Activated naive CD4-positive, alpha-beta T cell treated with anti-CD3 and anti-CD28 coated beads for 36 hours (primary cell): ENCODE measurements at regions of chr3 and their contacts with region 1.

Region 1: DNA sequence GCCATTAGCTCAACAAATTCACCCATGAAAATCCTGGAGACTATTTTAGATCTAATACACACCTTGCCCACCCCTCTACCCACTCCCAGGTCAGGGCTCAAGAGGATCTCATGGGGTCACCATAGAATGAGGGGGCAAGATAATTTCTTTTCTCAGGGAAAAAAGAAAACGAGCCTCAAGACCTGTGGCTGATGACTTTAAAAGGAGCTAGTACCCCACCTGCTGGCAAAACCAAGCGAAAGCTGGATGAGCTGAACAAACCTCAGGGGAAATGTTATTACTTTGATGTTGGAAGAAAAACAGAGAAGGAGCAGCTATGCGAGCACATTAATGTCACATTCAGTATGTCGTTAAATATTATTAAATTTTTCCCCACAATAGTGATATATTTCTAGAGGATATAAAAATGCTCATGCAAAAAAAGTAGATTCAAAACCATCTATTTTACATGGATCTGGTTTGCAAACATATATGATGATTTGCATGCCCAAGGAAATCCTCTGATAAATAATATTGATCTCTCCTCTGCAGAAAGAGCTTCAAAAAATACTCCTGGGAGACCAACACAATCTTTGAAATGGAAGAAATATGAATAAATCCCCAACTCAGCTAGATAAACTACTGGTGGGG is 37.7 kb downstream of the PLD1 start:
- DNase-seq: peak; percentile 76
- H3K4me3 Mint-ChIP-seq: no peak overlapping the region
- H3K27ac Mint-ChIP-seq: no peak overlapping the region
- H3K4me1 Mint-ChIP-seq: no peaks in the 10 kb centered on the region
- H3K27me3 Mint-ChIP-seq: peaks cover 4% of the 10 kb centered on the region

Region 2: DNA sequence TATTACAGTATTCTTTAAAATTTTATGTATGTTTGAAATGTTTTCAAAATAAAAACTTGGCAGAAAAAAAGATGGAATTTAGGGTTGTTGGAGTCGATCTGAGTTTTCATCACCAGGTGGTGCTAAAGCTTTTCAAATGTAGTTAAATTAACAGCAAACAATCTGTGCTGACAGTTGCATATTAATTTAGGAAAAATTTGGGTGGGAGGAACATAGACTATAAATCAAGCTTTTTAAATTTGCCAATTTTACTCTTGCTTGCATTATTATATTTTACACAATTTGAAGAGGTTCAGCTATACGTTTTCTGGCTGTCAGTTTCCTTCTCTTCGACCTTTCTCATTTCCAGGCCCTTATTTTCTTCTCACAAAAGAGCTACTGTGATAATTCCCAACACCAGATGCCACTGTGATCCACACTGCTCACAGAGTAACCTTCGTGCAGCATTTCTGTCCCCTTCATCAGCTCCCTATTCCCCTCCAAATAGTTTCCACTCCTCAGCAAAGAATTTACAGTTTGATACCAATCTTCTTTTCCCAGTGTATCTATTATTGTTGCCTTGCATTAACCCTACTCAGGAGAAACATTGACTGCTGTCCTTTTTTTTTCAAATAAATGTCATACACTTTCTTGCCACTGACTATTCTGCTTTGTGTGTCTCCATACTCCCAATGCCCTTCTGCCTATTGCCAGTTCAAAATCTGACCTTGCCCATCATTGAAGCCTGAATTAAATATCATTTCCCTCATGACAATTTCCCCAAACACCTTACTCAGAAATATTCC is 810.7 kb before region 1 on chr3:
- CTCF ChIA-PET with region 1: interaction called, 14 read pairs
- intact Hi-C with region 1: loop called (anchors 1 kb)
- DNase-seq: peak; percentile 21
- H3K4me3 Mint-ChIP-seq: no peak overlapping the region
- H3K27ac Mint-ChIP-seq: no peak overlapping the region
- H3K4me1 Mint-ChIP-seq: no peaks in the 10 kb centered on the region
- H3K27me3 Mint-ChIP-seq: peaks cover 3% of the 10 kb centered on the region

Region 3: DNA sequence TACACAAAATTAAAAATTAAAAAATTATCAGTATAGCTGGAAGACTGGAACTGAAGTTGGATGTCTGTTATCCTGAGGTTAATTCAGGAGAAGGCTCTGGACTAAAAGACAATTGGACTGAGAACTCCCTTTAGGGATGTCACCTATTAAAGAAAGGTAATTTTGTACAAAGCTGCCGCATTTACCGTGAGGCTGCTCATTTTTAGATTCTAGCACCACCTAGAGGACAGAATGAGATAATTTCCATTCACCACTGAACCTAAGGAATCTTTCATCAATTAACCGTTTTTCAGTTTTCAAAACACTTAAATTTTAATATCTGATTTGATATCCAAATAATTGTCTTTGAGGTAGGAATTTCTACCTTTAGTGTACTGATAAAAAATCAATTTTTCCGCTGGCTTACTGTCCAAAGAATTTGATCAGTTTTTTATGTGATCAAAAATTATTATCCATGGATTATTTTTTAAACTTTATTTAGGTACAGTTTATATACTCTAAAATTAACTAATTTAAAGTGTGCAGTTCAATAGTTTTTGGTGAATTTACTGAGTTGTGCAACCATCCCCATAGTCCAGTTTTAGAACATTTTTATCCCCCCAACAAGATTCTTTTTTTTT is 205.6 kb before region 1 on chr3:
- CTCF ChIA-PET with region 1: interaction called, 4 read pairs
- intact Hi-C with region 1: loop called (anchors 1 kb)
- DNase-seq: no peak
- H3K4me3 Mint-ChIP-seq: no peak overlapping the region
- H3K27ac Mint-ChIP-seq: no peak overlapping the region
- H3K4me1 Mint-ChIP-seq: peaks cover 9% of the 10 kb centered on the region
- H3K27me3 Mint-ChIP-seq: no peaks in the 10 kb centered on the region

Region 4: GRCh38 chr3:171646357-171647133 is 126.0 kb before region 1 on chr3:
- CTCF ChIA-PET with region 1: interaction called, 28 read pairs
- intact Hi-C with region 1: loop called (anchors 1 kb)
- DNase-seq: no peak
- H3K4me3 Mint-ChIP-seq: no peak overlapping the region
- H3K27ac Mint-ChIP-seq: no peak overlapping the region
- H3K4me1 Mint-ChIP-seq: no peaks in the 10 kb centered on the region
- H3K27me3 Mint-ChIP-seq: no peaks in the 10 kb centered on the region

Region 5: DNA sequence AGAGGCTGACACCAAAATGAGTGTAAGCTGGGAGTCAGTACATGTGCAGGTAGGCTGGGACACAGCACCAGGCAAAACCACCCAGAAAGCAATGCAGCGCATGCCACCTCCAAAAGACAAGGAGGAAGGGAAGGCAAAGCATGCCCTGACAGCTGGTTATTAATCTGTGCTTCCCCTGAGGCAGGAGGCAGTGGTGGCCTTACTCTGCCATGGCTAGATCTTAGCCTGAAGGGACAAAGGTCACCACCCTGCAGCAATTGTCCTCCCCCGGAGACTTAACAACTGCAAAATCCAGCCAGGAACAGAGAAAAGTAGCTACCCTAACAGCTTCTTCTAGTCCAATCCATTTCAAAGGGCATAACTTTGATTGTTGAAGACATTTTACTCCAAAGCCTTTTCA is 36.0 kb before region 1 on chr3:
- CTCF ChIA-PET with region 1: no interaction called
- intact Hi-C with region 1: no loop called
- DNase-seq: no peak
- H3K4me3 Mint-ChIP-seq: no peak overlapping the region
- H3K27ac Mint-ChIP-seq: no peak overlapping the region
- H3K4me1 Mint-ChIP-seq: no peaks in the 10 kb centered on the region
- H3K27me3 Mint-ChIP-seq: peaks cover 2% of the 10 kb centered on the region

Region 6: DNA sequence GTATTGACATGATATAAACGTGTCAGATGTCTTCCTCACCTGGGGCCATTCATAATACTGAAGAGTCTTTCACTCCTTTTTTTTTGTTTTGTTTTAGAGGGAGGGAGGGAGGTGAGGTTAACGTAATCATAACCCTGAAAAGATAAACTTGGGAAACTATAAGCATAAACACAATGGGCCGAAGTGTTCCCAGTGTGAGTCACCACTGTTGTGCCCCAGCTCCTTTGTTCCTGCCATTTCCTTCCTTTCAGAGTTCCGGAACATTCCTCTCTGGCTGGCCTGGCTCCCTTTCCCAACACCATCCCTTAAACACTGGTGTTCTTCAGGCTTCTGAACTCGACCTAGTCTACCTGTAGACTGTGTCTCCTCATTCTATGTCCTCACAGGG is 19.1 kb after region 1 on chr3:
- CTCF ChIA-PET with region 1: interaction called, 15 read pairs
- intact Hi-C with region 1: no loop called
- DNase-seq: no peak
- H3K4me3 Mint-ChIP-seq: no peak overlapping the region
- H3K27ac Mint-ChIP-seq: no peak overlapping the region
- H3K4me1 Mint-ChIP-seq: no peaks in the 10 kb centered on the region
- H3K27me3 Mint-ChIP-seq: peaks cover 2% of the 10 kb centered on the region

Region 7: DNA sequence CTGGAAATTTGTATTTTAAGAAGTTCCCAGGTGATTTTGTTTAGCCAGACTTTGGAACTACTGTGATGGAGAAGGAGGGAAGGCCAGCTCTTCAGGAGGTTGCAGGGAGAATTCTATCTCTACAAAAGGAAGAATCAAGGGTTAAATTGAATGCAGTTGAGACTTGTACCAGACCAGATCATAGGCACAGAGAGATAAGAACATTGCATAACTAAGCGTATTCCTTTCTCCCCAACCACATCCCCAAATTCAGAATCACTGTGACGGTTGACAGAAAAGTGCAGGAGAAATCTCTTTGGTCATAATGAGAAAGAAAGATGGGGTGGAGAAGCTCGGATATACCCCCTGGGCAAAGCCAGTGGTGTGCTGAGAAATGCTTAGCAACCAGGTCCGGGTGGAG is 30.5 kb after region 1 on chr3:
- CTCF ChIA-PET with region 1: no interaction called
- intact Hi-C with region 1: no loop called
- DNase-seq: no peak
- H3K4me3 Mint-ChIP-seq: no peak overlapping the region
- H3K27ac Mint-ChIP-seq: no peak overlapping the region
- H3K4me1 Mint-ChIP-seq: peaks cover 8% of the 10 kb centered on the region
- H3K27me3 Mint-ChIP-seq: peaks cover 18% of the 10 kb centered on the region

Region 8: GRCh38 chr3:171883257-171883892 is 110.8 kb after region 1 on chr3:
- CTCF ChIA-PET with region 1: no interaction called
- intact Hi-C with region 1: no loop called
- DNase-seq: no peak
- H3K4me3 Mint-ChIP-seq: no peak overlapping the region
- H3K27ac Mint-ChIP-seq: no peak overlapping the region
- H3K4me1 Mint-ChIP-seq: no peaks in the 10 kb centered on the region
- H3K27me3 Mint-ChIP-seq: peaks cover 5% of the 10 kb centered on the region

Region 9: GRCh38 chr3:171967137-171967783 is 194.7 kb after region 1 on chr3:
- CTCF ChIA-PET with region 1: no interaction called
- intact Hi-C with region 1: no loop called
- DNase-seq: no peak
- H3K4me3 Mint-ChIP-seq: no peak overlapping the region
- H3K27ac Mint-ChIP-seq: no peak overlapping the region
- H3K4me1 Mint-ChIP-seq: peaks cover 4% of the 10 kb centered on the region
- H3K27me3 Mint-ChIP-seq: no peaks in the 10 kb centered on the region